Activated CD8-positive, alpha-beta T cell treated with anti-CD3 and anti-CD28 coated beads for 36 hours (primary cell): ENCODE measurements at regions of chr6 and their contacts with region 1.

Region 1: DNA sequence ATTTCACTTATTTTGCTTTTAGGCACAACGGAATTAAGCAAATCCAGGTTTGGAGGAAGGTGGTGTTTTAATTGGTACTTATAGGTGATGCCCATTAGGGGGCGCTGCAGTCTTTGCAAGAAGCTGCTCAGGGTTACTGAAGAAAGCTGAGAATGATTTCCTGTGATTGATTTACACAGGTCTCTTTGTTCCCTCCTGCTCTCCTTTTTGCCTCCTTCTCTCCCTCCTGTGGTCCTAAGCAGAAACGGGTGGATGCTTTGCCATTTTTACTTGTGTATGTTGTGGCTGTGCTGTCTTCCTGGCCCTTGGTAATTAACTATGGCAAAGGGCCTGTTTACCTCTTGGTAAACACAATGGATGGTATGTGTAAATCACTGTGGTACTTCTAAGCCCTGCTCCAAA is 97.8 kb downstream of the ANKS1A start:
- DNase-seq: peak; percentile 81
- ATAC-seq: peak; percentile 84
- H3K4me3 Mint-ChIP-seq: no peak overlapping the region
- H3K27ac Mint-ChIP-seq: no peak overlapping the region
- H3K4me1 Mint-ChIP-seq: no peaks in the 10 kb centered on the region
- H3K27me3 Mint-ChIP-seq: no peaks in the 10 kb centered on the region
- CTCF ChIP-seq: peak; percentile 83

Region 2: GRCh38 chr6:34196126-34196830 is 790.6 kb before region 1 on chr6:
- CTCF ChIA-PET with region 1: no interaction called
- POLR2A ChIA-PET with region 1: no interaction called
- intact Hi-C with region 1: no loop called
- DNase-seq: peak; percentile 90
- ATAC-seq: peak; percentile 97
- H3K4me3 Mint-ChIP-seq: peak overlapping the region; percentile 71
- H3K27ac Mint-ChIP-seq: peak overlapping the region; percentile 67
- H3K4me1 Mint-ChIP-seq: peaks cover 10% of the 10 kb centered on the region
- H3K27me3 Mint-ChIP-seq: no peaks in the 10 kb centered on the region
- CTCF ChIP-seq: peak; percentile 99

Region 3: GRCh38 chr6:34810936-34811632 is 175.8 kb before region 1 on chr6:
- CTCF ChIA-PET with region 1: no interaction called
- POLR2A ChIA-PET with region 1: no interaction called
- intact Hi-C with region 1: no loop called
- DNase-seq: peak; percentile 68
- ATAC-seq: peak; percentile 97
- H3K4me3 Mint-ChIP-seq: no peak overlapping the region
- H3K27ac Mint-ChIP-seq: no peak overlapping the region
- H3K4me1 Mint-ChIP-seq: peaks cover 21% of the 10 kb centered on the region
- H3K27me3 Mint-ChIP-seq: no peaks in the 10 kb centered on the region
- CTCF ChIP-seq: no peak

Region 4: DNA sequence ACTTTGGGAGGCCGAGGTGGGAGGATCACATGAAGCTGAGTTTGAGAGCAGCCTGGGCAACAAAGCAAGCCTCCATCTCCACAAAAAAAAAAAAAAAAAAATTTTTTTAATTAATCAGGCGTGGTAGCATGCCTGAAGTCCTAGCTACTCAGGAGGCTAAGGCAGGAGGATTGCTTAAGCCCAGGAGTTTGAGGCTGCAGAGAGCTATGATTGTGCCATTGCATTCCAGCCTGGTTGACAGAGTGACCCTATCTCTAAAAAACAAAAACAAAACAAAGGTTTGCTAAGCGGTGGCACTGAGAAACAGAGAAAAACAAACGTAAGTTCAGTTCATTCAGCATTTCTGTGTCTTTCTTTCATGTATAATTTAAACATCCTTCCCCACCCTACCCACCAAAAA is 19.4 kb before region 1 on chr6:
- CTCF ChIA-PET with region 1: interaction called, 22 read pairs
- POLR2A ChIA-PET with region 1: no interaction called
- intact Hi-C with region 1: no loop called
- DNase-seq: no peak
- ATAC-seq: no peak
- H3K4me3 Mint-ChIP-seq: no peak overlapping the region
- H3K27ac Mint-ChIP-seq: no peak overlapping the region
- H3K4me1 Mint-ChIP-seq: no peaks in the 10 kb centered on the region
- H3K27me3 Mint-ChIP-seq: no peaks in the 10 kb centered on the region
- CTCF ChIP-seq: no peak

Region 5: GRCh38 chr6:34973547-34974248 is 13.1 kb before region 1 on chr6:
- CTCF ChIA-PET with region 1: interaction called, 22 read pairs
- POLR2A ChIA-PET with region 1: no interaction called
- intact Hi-C with region 1: no loop called
- DNase-seq: peak; percentile 21
- ATAC-seq: no peak
- H3K4me3 Mint-ChIP-seq: no peak overlapping the region
- H3K27ac Mint-ChIP-seq: no peak overlapping the region
- H3K4me1 Mint-ChIP-seq: no peaks in the 10 kb centered on the region
- H3K27me3 Mint-ChIP-seq: no peaks in the 10 kb centered on the region
- CTCF ChIP-seq: peak; percentile 20

Region 6: GRCh38 chr6:35007016-35007415 is 20.2 kb after region 1 on chr6:
- CTCF ChIA-PET with region 1: interaction called, 13 read pairs
- POLR2A ChIA-PET with region 1: no interaction called
- intact Hi-C with region 1: no loop called
- DNase-seq: no peak
- ATAC-seq: no peak
- H3K4me3 Mint-ChIP-seq: no peak overlapping the region
- H3K27ac Mint-ChIP-seq: no peak overlapping the region
- H3K4me1 Mint-ChIP-seq: peaks cover 11% of the 10 kb centered on the region
- H3K27me3 Mint-ChIP-seq: no peaks in the 10 kb centered on the region
- CTCF ChIP-seq: no peak

Region 7: GRCh38 chr6:35099116-35099515 is 112.3 kb after region 1 on chr6:
- CTCF ChIA-PET with region 1: no interaction called
- POLR2A ChIA-PET with region 1: no interaction called
- intact Hi-C with region 1: no loop called
- DNase-seq: no peak
- ATAC-seq: no peak
- H3K4me3 Mint-ChIP-seq: no peak overlapping the region
- H3K27ac Mint-ChIP-seq: no peak overlapping the region
- H3K4me1 Mint-ChIP-seq: no peaks in the 10 kb centered on the region
- H3K27me3 Mint-ChIP-seq: peaks cover 2% of the 10 kb centered on the region
- CTCF ChIP-seq: no peak

Region 8: GRCh38 chr6:35202066-35202546 is 215.3 kb after region 1 on chr6:
- CTCF ChIA-PET with region 1: interaction called, 57 read pairs
- POLR2A ChIA-PET with region 1: no interaction called
- intact Hi-C with region 1: loop called (anchors 10 kb)
- DNase-seq: no peak
- ATAC-seq: no peak
- H3K4me3 Mint-ChIP-seq: no peak overlapping the region
- H3K27ac Mint-ChIP-seq: no peak overlapping the region
- H3K4me1 Mint-ChIP-seq: no peaks in the 10 kb centered on the region
- H3K27me3 Mint-ChIP-seq: peaks cover 35% of the 10 kb centered on the region
- CTCF ChIP-seq: no peak